Dorsolateral prefrontal cortex (tissue), 120 donors: ENCODE measurements at regions of chr2 and their contacts with region 1.

Region 1: GRCh38 chr2:55282110-55282917 is 13.3 kb upstream of the MTIF2 start:
- DNase-seq: peak; percentile 67 to 90 (median 82)
- H3K4me3 ChIP-seq: peak overlapping the region; percentile 56 to 94 (median 79)
- H3K27ac ChIP-seq: peak overlapping the region; percentile 75 to 99 (median 95)
- H3K27me3 ChIP-seq: no peaks in the 10 kb centered on the region
- CTCF ChIP-seq: peak in 23 of 56 donors; percentile 9 to 48 (median 21)

Region 2: DNA sequence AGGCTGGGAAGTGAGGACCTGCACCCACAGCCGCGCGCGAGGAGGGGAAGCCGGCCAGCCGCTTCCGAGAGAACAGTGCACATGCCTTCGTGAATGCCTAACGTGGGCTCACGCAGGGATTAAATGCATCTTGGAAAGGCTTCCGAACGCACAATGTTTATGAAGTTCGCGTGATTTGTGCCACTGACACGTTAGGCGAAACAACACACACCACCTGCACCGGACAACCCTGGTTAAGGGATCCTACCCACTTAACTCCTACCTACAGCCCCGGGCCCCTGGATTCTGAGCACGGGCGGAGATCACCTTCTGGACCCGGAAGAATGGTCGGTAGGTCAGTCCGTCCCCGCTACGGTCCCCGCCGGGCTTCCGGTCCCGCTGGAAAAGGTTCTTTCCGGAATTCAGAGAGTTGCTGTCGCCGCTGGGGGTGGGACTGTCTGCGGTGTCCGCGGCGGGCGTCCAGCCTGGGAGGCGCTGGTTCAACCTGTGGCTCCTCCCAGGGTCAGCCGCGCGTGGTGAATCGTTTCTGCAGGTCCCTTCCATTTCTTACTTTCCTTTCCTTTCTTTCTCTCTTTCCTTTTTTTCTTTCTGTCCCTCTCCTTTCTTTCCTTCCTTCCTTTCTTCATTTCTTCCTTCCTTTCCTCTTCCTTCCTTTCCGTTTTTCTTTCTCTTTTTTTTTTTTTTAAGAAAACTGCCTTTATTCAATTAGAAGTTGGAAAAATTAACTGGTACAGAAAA is 13.2 kb before region 1 on chr2 and contains the start of gene MTIF2:
- intact Hi-C with region 1: loop called in 1 of 2 experiments (anchors 2 kb)
- DNase-seq: peak; percentile 88 to 95 (median 93)
- H3K4me3 ChIP-seq: peak within 1 kb of the TSS; percentile 52 to 96 (median 82)
- H3K27ac ChIP-seq: peak within 1 kb of the TSS; percentile 46 to 95 (median 88)
- H3K27me3 ChIP-seq: no peaks in the 10 kb centered on the region
- CTCF ChIP-seq: peak in 53 of 56 donors; percentile 16 to 66 (median 46)
- total RNA-seq, gene MTIF2: 15.2 to 33.5 (median 24.3) TPM

Region 3: DNA sequence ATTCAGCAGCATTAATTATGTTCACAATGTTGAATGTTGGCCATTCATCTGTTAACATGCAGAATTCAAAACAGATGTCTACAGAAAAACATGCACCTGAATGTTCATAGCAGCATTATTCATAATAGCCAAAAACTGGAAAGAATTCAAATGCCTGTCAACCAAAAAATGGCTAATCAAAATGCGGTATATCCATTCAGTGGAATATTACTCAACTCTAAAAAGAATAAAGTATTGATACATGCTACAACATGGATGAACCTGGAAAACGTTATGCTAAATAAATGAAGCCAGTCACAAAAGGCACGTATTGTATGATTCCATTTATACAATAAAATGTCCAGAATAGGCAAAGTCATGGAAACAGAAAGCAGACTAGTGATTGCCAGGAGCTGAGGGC is 69.4 kb after region 1 on chr2:
- intact Hi-C with region 1: no loop called
- DNase-seq: no peak
- H3K4me3 ChIP-seq: no peak overlapping the region
- H3K27ac ChIP-seq: peak overlapping the region in 3 of 59 donors; percentile 18 to 76 (median 40)
- H3K27me3 ChIP-seq: no peaks in the 10 kb centered on the region
- CTCF ChIP-seq: no peak

Region 4: DNA sequence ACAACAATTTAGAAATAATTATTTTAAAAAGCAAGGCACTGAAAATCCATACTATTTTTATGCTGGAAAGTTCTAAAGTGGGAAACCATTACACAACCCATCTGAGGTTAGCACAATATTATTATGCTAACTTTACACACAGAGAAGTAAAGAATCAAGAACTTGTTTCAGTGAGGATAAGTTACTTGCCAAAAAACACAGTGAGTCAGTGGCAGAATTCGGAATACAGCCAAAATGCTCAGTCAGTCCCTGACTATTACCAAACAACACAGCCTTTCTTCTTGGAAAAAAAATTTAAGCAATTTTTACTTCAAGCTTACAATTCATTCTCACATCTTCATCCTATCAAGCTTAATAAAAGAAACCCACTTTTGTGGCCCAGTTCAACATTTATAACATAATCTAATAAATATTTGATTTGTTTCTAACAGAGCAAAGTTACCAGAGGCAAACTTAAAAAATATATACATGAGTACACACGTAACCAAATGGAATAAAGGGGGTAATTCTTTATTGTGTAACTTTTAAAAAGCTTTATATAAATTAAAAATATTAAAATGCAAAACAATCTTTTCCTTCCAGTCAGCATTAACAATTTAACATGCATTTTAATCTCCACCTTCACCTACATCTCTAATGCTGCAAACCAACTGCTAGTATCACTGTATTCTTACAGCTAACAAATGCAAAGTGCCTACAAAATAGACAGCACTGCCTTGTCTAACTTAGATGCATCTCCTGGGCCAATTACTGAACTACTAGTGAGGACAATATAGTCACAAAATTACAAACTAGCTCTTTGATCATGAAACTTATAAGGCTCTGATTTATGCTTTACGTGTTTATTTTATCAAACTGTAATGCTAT is 82.1 kb after region 1 on chr2:
- intact Hi-C with region 1: loop called in 1 of 2 experiments (anchors 10 kb)
- DNase-seq: peak in 2 of 10 donors; percentile 44 to 70
- H3K4me3 ChIP-seq: peak overlapping the region in 42 of 59 donors; percentile 3 to 52 (median 16)
- H3K27ac ChIP-seq: peak overlapping the region; percentile 22 to 97 (median 91)
- H3K27me3 ChIP-seq: no peaks in the 10 kb centered on the region
- CTCF ChIP-seq: peak in 9 of 56 donors; percentile 2 to 23 (median 11)

Region 5: GRCh38 chr2:55419679-55420438 is 137.5 kb after region 1 on chr2 and contains the start of gene CCDC88A:
- intact Hi-C with region 1: loop called (anchors 2 to 5 kb)
- DNase-seq: peak; percentile 89 to 97 (median 93)
- H3K4me3 ChIP-seq: peak within 1 kb of the TSS; percentile 70 to 96 (median 88)
- H3K27ac ChIP-seq: peak within 1 kb of the TSS; percentile 86 to 99 (median 98)
- H3K27me3 ChIP-seq: no peaks in the 10 kb centered on the region
- CTCF ChIP-seq: peak in 46 of 56 donors; percentile 11 to 65 (median 38)
- total RNA-seq, gene CCDC88A: 151 to 514 (median 261) TPM

Region 6: GRCh38 chr2:55519938-55520885 is 237.9 kb after region 1 on chr2:
- intact Hi-C with region 1: loop called in 1 of 2 experiments (anchors 5 kb)
- DNase-seq: peak in 4 of 10 donors; percentile 24 to 46 (median 34)
- H3K4me3 ChIP-seq: peak overlapping the region; percentile 62 to 99 (median 86)
- H3K27ac ChIP-seq: peak overlapping the region in 58 of 59 donors; percentile 28 to 97 (median 91)
- H3K27me3 ChIP-seq: no peaks in the 10 kb centered on the region
- CTCF ChIP-seq: no peak